BJ (cell line): ENCODE measurements at regions of chr6 and their contacts with region 1.

Region 1: GRCh38 chr6:117602151-117602898 is at the start of gene GOPC:
- DNase-seq: peak; percentile 93
- H3K4me3 ChIP-seq: peak within 1 kb of the TSS; percentile 87
- H3K27me3 ChIP-seq: no peaks in the 10 kb centered on the region
- CTCF ChIP-seq: peak; percentile 31; the same call in 1 of the 2 replicates
- polyA plus RNA-seq, gene GOPC: 26.9 and 57.1 TPM in 2 replicates

Region 2: GRCh38 chr6:117265410-117266256 is 336.7 kb before region 1 on chr6 and contains the start of gene VGLL2:
- CTCF ChIA-PET with region 1: no interaction called
- POLR2A ChIA-PET with region 1: no interaction called
- DNase-seq: no peak
- H3K4me3 ChIP-seq: peak within 1 kb of the TSS; percentile 14
- H3K27me3 ChIP-seq: peaks cover 67% of the 10 kb centered on the region
- CTCF ChIP-seq: 0 out of 2 replicates have a peak, but pooled peaks have one; percentile 11
- polyA plus RNA-seq, gene VGLL2: not detected in 2 replicates

Region 3: GRCh38 chr6:117346142-117346930 is 256.0 kb before region 1 on chr6:
- CTCF ChIA-PET with region 1: interaction called, 44 read pairs
- POLR2A ChIA-PET with region 1: no interaction called
- DNase-seq: no peak
- H3K4me3 ChIP-seq: no peak overlapping the region
- H3K27me3 ChIP-seq: no peaks in the 10 kb centered on the region
- CTCF ChIP-seq: peak; percentile 24; the same call in 1 of the 2 replicates

Region 4: DNA sequence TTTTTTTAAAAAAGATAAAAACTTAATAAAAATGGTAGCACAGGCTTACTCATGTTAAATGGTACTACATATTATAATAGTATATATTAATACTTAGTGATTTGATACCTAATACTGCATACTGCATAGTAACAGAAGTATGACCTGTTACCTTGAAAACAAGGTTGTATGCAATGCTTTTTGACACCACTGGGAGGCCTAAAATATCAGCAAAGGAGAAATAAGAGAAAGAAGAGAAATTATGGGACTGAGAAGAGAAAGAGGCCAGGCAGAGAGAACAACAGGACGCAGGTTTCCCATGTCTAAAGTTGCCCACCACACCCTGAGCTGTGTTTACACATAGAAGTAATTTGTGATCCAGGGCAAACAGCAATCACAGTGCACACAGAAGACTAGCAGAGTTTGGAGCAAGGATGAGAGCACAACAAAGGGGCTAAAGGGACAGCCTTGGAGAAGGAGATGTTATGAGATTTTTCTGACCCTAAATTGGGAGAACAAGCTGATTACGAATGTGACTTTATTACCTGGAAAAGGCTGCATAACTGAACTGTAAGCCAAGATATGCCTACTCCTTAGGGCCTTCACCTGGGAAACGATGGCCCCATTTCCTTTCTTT is 249.8 kb before region 1 on chr6:
- CTCF ChIA-PET with region 1: interaction called, 34 read pairs
- POLR2A ChIA-PET with region 1: no interaction called
- DNase-seq: no peak
- H3K4me3 ChIP-seq: no peak overlapping the region
- H3K27me3 ChIP-seq: no peaks in the 10 kb centered on the region
- CTCF ChIP-seq: peak; percentile 66

Region 5: DNA sequence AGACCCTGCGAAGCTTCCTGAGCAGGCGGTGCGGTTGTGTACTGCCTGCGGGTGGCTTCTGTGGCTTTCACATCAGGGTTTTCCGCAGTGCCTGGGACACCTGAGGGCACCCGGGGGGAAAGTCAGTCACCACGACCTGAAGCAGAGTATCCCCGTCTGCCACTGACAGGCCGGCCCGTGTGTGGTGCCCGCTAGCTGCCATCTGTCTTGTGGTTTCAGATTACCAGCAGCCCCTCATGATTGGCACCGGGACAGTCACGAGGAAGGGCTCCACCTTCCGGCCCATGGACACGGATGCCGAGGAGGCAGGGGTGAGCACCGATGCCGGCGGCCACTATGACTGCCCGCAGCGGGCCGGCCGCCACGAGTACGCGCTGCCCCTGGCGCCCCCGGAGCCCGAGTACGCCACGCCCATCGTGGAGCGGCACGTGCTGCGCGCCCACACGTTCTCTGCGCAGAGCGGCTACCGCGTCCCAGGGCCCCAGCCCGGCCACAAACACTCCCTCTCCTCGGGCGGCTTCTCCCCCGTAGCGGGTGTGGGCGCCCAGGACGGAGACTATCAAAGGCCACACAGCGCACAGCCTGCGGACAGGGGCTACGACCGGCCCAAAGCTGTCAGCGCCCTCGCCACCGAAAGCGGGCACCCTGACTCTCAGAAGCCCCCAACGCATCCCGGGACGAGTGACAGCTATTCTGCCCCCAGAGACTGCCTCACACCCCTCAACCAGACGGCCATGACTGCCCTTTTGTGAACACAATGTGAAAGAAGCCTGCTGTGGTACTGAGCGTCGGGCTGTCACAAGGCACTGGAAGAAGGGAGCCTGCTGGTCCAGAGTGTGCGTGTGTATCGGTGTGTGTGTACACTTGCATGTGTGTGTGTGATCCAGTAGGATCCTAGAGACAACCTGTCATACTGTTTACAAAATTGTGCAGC is 54.4 kb before region 1 on chr6:
- CTCF ChIA-PET with region 1: interaction called, 14 read pairs
- POLR2A ChIA-PET with region 1: no interaction called
- DNase-seq: no peak
- H3K4me3 ChIP-seq: peak overlapping the region; percentile 27
- H3K27me3 ChIP-seq: no peaks in the 10 kb centered on the region
- CTCF ChIP-seq: peak; percentile 31

Region 6: DNA sequence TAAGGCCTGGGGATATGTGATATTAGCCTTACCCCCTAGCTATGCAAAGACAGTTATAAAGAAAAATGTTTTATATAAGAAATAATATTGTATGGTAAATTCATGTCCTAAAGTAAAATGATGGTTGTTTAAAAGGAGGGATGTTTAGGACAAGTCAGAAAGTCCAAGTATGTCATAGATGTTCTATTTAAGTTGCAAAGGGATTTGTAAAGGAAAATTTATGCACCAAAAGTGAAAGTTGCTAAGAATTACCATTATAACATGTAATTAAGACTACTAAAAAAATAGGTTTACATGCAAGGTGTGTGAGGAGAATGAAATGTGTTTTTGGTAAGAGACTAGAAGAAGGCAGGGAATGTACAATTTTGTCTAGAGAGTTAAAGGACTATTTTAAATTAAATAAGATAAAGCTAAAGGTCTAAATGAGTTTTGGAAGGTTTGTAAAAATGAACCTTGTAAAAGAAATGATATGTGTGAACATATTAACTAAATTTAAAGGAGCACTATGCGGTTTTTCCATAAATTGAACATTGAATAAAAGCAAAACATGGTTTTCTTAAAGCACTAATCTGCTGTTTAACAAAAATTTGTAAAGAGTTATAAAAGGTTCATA is 22.6 kb after region 1 on chr6:
- CTCF ChIA-PET with region 1: no interaction called
- POLR2A ChIA-PET with region 1: no interaction called
- DNase-seq: no peak
- H3K4me3 ChIP-seq: no peak overlapping the region
- H3K27me3 ChIP-seq: no peaks in the 10 kb centered on the region
- CTCF ChIP-seq: no peak